ENCODE measurements at regions of chr11 and their contacts with region 1.

Region 1: DNA sequence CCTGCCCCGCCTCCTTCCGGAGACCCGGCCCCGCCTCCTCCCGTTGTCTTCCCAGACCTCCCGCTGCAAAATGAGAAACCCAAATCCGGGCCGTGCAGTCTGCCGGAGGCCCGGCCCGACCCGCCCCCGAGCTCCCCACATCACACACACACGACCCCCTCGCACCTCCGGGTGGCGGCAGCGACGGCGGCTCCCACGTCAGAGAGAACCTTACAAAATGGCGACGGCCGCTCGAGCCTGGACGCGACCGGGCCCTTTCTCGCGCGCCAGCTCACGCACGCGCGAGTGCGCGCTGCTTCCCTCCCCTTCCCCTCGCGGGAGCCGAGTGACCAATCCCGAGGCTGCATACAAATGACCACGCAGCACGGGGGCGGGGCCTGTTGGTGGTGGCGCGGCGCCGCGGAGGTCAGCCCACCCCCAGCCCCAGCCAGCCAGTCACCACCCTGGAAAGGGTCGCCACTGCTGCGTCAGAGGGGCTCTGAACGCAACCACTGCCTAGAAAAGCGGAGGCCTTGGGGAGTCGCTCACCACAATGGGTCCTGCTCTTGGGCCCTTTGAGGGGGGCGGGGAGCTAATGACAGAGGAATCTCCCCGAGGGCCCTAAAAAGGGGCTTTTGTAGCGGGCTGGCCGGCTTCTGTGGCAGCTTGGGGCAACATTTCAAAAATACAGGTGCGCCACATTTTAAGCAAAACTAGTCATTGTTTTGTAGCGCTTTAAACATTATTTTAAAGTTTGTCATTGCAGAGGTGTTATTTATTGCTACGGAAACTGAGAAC is at the start of gene RBM4B:
- DNase-seq: peak; percentile 100
- H3K4me3 ChIP-seq: peak within 1 kb of the TSS; percentile 71
- H3K4me3 Mint-ChIP-seq: peak within 1 kb of the TSS; percentile 94
- H3K27ac Mint-ChIP-seq: peak within 1 kb of the TSS; percentile 98
- H3K4me1 ChIP-seq: peaks cover 21% of the 10 kb centered on the region
- H3K4me1 Mint-ChIP-seq: peaks cover 16% of the 10 kb centered on the region
- H3K27me3 ChIP-seq: no peaks in the 10 kb centered on the region
- H3K27me3 Mint-ChIP-seq: no peaks in the 10 kb centered on the region
- CTCF ChIP-seq: no peak
- total RNA-seq, gene RBM4B: 39.8 and 45.8 TPM in 2 replicates

Region 2: GRCh38 chr11:66421492-66422205 is 256.1 kb before region 1 on chr11:
- CTCF ChIA-PET with region 1: interaction called, 10 read pairs
- POLR2A ChIA-PET with region 1: interaction called, 3 read pairs
- intact Hi-C with region 1: no loop called
- DNase-seq: peak; percentile 92 to 96
- H3K4me3 ChIP-seq: no peak overlapping the region
- H3K4me3 Mint-ChIP-seq: no peak overlapping the region
- H3K27ac Mint-ChIP-seq: no peak overlapping the region
- H3K4me1 ChIP-seq: no peaks in the 10 kb centered on the region
- H3K4me1 Mint-ChIP-seq: peaks cover 14% of the 10 kb centered on the region
- H3K27me3 ChIP-seq: no peaks in the 10 kb centered on the region; the same call in 1 of the 2 replicates
- H3K27me3 Mint-ChIP-seq: peaks cover 9% of the 10 kb centered on the region
- CTCF ChIP-seq: no peak

Region 3: GRCh38 chr11:66480117-66480938 is 197.5 kb before region 1 on chr11 and contains the start of gene DPP3:
- CTCF ChIA-PET with region 1: interaction called, 18 read pairs
- POLR2A ChIA-PET with region 1: interaction called, 40 read pairs
- intact Hi-C with region 1: loop called (anchors 1 kb)
- DNase-seq: peak; percentile 100
- H3K4me3 ChIP-seq: peak within 1 kb of the TSS; percentile 68
- H3K4me3 Mint-ChIP-seq: peak within 1 kb of the TSS; percentile 89
- H3K27ac Mint-ChIP-seq: peak within 1 kb of the TSS; percentile 89
- H3K4me1 ChIP-seq: peaks cover 6% of the 10 kb centered on the region; the same call in 1 of the 2 replicates
- H3K4me1 Mint-ChIP-seq: peaks cover 24% of the 10 kb centered on the region
- H3K27me3 ChIP-seq: no peaks in the 10 kb centered on the region
- H3K27me3 Mint-ChIP-seq: no peaks in the 10 kb centered on the region
- CTCF ChIP-seq: no peak
- total RNA-seq, gene DPP3: 106 TPM in 2 replicates

Region 4: GRCh38 chr11:66568124-66568916 is 109.5 kb before region 1 on chr11 and contains the start of gene CTSF:
- CTCF ChIA-PET with region 1: no interaction called
- POLR2A ChIA-PET with region 1: no interaction called
- intact Hi-C with region 1: no loop called
- DNase-seq: no peak
- H3K4me3 ChIP-seq: no peak within 1 kb of the TSS
- H3K4me3 Mint-ChIP-seq: no peak within 1 kb of the TSS
- H3K27ac Mint-ChIP-seq: no peak within 1 kb of the TSS
- H3K4me1 ChIP-seq: no peaks in the 10 kb centered on the region
- H3K4me1 Mint-ChIP-seq: no peaks in the 10 kb centered on the region
- H3K27me3 ChIP-seq: no peaks in the 10 kb centered on the region
- H3K27me3 Mint-ChIP-seq: no peaks in the 10 kb centered on the region
- CTCF ChIP-seq: no peak
- total RNA-seq, gene CTSF: not detected in 2 replicates

Region 5: DNA sequence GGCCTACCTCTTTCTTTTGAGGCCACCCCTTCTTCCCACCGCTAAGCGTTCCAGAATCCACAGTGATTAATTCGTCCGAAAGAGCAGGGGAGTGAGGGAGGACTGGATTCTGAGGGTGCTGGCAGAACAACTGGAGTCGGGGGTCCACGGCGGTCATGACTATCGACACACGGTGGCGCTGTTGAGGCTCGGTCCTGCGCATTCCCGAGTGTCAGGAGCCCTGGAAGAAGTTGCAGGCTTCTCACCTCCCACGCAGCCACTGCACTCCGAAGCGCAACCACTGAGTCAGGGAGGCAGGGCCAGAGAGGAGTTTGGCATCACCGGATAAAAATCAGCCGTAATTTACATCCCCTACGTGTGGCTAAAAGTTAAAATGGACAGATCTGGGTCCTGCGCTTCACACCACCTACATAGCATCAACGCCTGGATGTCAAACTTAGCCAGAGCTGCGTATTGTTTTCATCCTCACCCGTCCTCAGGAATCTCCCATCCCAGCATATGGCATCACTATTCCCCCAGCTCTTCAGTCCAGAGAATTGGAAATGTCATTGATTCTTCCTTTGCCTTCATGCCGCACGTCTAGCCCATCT is 98.7 kb before region 1 on chr11:
- CTCF ChIA-PET with region 1: interaction called, 4 read pairs
- POLR2A ChIA-PET with region 1: no interaction called
- intact Hi-C with region 1: loop called (anchors 1 kb)
- DNase-seq: peak; percentile 75 to 85
- H3K4me3 ChIP-seq: no peak overlapping the region
- H3K4me3 Mint-ChIP-seq: no peak overlapping the region
- H3K27ac Mint-ChIP-seq: no peak overlapping the region
- H3K4me1 ChIP-seq: no peaks in the 10 kb centered on the region
- H3K4me1 Mint-ChIP-seq: peaks cover 15% of the 10 kb centered on the region
- H3K27me3 ChIP-seq: no peaks in the 10 kb centered on the region; the same call in 1 of the 2 replicates
- H3K27me3 Mint-ChIP-seq: peaks cover 6% of the 10 kb centered on the region
- CTCF ChIP-seq: peak; percentile 88 to 95

Region 6: DNA sequence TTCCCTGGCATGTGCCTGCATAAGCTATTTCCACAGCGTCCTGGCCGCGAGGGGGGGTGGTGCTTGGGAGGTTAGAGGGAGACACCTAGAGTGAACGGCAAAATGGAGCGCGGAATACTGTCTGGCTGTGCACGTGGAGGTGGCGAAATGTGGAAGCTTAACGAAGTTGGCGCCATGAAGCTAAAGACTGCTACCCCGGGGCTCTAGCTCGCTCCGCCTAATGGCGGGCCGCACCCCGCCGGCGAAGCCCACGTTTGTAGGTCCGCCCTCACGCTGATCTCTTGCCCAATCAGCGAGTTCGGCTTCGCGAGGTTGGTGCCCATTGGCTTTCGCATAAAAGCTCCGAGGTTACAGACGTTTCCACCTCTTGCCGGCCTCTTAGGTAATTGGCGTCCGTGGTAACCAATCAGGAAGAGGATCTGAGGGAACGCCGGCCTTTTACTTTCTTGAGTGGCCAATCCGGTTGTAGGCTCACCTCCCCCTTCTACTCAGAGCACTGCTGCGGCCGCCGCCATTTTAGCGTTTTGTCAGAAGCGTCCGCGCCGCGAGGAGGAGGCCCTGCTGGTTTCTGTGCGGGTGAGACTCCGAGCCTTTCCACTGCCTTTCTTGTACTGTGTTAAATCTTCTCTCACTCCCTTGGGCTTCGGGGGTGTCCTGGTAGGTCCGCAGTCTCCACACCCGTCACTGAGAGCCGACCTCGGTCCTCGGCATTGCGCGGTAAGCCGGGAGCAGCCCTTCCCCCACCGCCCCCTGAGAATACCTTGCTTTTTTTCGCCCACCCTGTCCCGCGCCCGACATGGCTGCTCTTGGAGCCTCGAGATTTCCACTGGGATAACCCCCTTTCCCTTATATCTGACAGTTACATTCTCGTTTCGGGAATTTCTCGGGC is 39.4 kb before region 1 on chr11 and contains the start of gene RBM4:
- CTCF ChIA-PET with region 1: interaction called, 32 read pairs
- POLR2A ChIA-PET with region 1: interaction called, 62 read pairs
- intact Hi-C with region 1: loop called (anchors 1 kb)
- DNase-seq: peak; percentile 100
- H3K4me3 ChIP-seq: peak within 1 kb of the TSS; percentile 70
- H3K4me3 Mint-ChIP-seq: peak within 1 kb of the TSS; percentile 95
- H3K27ac Mint-ChIP-seq: peak within 1 kb of the TSS; percentile 99
- H3K4me1 ChIP-seq: peaks cover 31% of the 10 kb centered on the region
- H3K4me1 Mint-ChIP-seq: peaks cover 48% of the 10 kb centered on the region
- H3K27me3 ChIP-seq: no peaks in the 10 kb centered on the region
- H3K27me3 Mint-ChIP-seq: no peaks in the 10 kb centered on the region
- CTCF ChIP-seq: peak in 1 of 2 experiments; percentile 26
- total RNA-seq, gene RBM4: 257 and 273 TPM in 2 replicates

Region 7: GRCh38 chr11:66694732-66695207 is 17.0 kb after region 1 on chr11:
- CTCF ChIA-PET with region 1: interaction called, 4 read pairs
- POLR2A ChIA-PET with region 1: no interaction called
- intact Hi-C with region 1: loop called (anchors 1 kb)
- DNase-seq: peak; percentile 98 to 99
- H3K4me3 ChIP-seq: no peak overlapping the region
- H3K4me3 Mint-ChIP-seq: no peak overlapping the region
- H3K27ac Mint-ChIP-seq: no peak overlapping the region
- H3K4me1 ChIP-seq: peaks cover 3% of the 10 kb centered on the region; the same call in 1 of the 2 replicates
- H3K4me1 Mint-ChIP-seq: no peaks in the 10 kb centered on the region
- H3K27me3 ChIP-seq: no peaks in the 10 kb centered on the region
- H3K27me3 Mint-ChIP-seq: no peaks in the 10 kb centered on the region
- CTCF ChIP-seq: peak; percentile 99

Region 8: GRCh38 chr11:66720223-66720947 is 42.6 kb after region 1 on chr11:
- CTCF ChIA-PET with region 1: no interaction called
- POLR2A ChIA-PET with region 1: no interaction called
- intact Hi-C with region 1: no loop called
- DNase-seq: peak; percentile 34 to 72
- H3K4me3 ChIP-seq: no peak overlapping the region
- H3K4me3 Mint-ChIP-seq: peak overlapping the region; percentile 8
- H3K27ac Mint-ChIP-seq: peak overlapping the region; percentile 48
- H3K4me1 ChIP-seq: 0 out of 2 replicates have a peak, but pooled peaks cover 14% of the 10 kb centered on the region
- H3K4me1 Mint-ChIP-seq: peaks cover 27% of the 10 kb centered on the region
- H3K27me3 ChIP-seq: no peaks in the 10 kb centered on the region
- H3K27me3 Mint-ChIP-seq: no peaks in the 10 kb centered on the region
- CTCF ChIP-seq: no peak

Region 9: GRCh38 chr11:66996609-66997405 is 319.0 kb after region 1 on chr11:
- CTCF ChIA-PET with region 1: interaction called, 11 read pairs
- POLR2A ChIA-PET with region 1: no interaction called
- intact Hi-C with region 1: no loop called
- DNase-seq: peak; percentile 87 to 90
- H3K4me3 ChIP-seq: no peak overlapping the region
- H3K4me3 Mint-ChIP-seq: no peak overlapping the region
- H3K27ac Mint-ChIP-seq: peak overlapping the region; percentile 56
- H3K4me1 ChIP-seq: peaks cover 11% of the 10 kb centered on the region
- H3K4me1 Mint-ChIP-seq: peaks cover 11% of the 10 kb centered on the region
- H3K27me3 ChIP-seq: no peaks in the 10 kb centered on the region
- H3K27me3 Mint-ChIP-seq: no peaks in the 10 kb centered on the region
- CTCF ChIP-seq: no peak

Region 10: DNA sequence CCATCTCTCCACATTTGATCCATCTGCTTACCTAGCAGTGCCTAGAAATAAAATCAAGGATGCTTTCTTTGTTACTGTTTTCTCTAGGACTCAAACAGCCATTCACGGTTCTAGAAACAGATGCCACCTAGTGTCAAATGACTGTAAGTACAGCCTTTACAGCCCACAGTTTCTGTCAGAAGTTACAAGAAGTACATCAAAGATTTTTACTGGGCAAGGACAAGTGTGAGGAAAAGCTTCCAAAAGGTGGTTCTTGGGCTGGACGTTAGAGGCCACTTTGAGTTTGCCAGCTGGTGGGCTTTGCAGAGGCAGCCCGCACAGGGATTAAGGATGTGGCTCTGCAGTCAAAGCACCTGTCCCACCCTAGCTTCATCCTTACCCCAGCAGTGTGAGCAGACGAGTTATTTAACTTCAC is 1528.4 kb after region 1 on chr11:
- CTCF ChIA-PET with region 1: no interaction called
- POLR2A ChIA-PET with region 1: no interaction called
- intact Hi-C with region 1: no loop called
- DNase-seq: peak in 1 of 2 experiments; percentile 70
- H3K4me3 ChIP-seq: no peak overlapping the region
- H3K4me3 Mint-ChIP-seq: no peak overlapping the region
- H3K27ac Mint-ChIP-seq: no peak overlapping the region
- H3K4me1 ChIP-seq: peaks cover 8% of the 10 kb centered on the region; the same call in 1 of the 2 replicates
- H3K4me1 Mint-ChIP-seq: peaks cover 26% of the 10 kb centered on the region
- H3K27me3 ChIP-seq: no peaks in the 10 kb centered on the region
- H3K27me3 Mint-ChIP-seq: no peaks in the 10 kb centered on the region
- CTCF ChIP-seq: peak; percentile 89 to 95

Measured in Caco-2 (cell line).